ENCODE measurements at regions of chr1 and their contacts with region 1.

Region 1: GRCh38 chr1:161021165-161021960 is 411 bp upstream of the F11R start:
- DNase-seq: peak; percentile 99
- H3K4me3 Mint-ChIP-seq: peak overlapping the region; percentile 80
- H3K27ac Mint-ChIP-seq: peak overlapping the region; percentile 94
- H3K4me1 Mint-ChIP-seq: peaks cover 47% of the 10 kb centered on the region
- H3K27me3 Mint-ChIP-seq: no peaks in the 10 kb centered on the region
- CTCF ChIP-seq: no peak

Region 2: GRCh38 chr1:160997323-160998038 is 23.9 kb before region 1 on chr1:
- CTCF ChIA-PET with region 1: interaction called, 58 read pairs
- POLR2A ChIA-PET with region 1: interaction called, 148 read pairs
- intact Hi-C with region 1: loop called (anchors 2 kb)
- DNase-seq: peak; percentile 74
- H3K4me3 Mint-ChIP-seq: no peak overlapping the region
- H3K27ac Mint-ChIP-seq: no peak overlapping the region
- H3K4me1 Mint-ChIP-seq: peaks cover 35% of the 10 kb centered on the region
- H3K27me3 Mint-ChIP-seq: no peaks in the 10 kb centered on the region
- CTCF ChIP-seq: peak; percentile 44

Region 3: GRCh38 chr1:161071886-161072371 is 50.6 kb after region 1 on chr1:
- CTCF ChIA-PET with region 1: interaction called, 11 read pairs
- POLR2A ChIA-PET with region 1: interaction called, 82 read pairs
- intact Hi-C with region 1: no loop called
- DNase-seq: peak; percentile 73
- H3K4me3 Mint-ChIP-seq: peak overlapping the region; percentile 90
- H3K27ac Mint-ChIP-seq: peak overlapping the region; percentile 46
- H3K4me1 Mint-ChIP-seq: peaks cover 51% of the 10 kb centered on the region
- H3K27me3 Mint-ChIP-seq: no peaks in the 10 kb centered on the region
- CTCF ChIP-seq: peak; percentile 87

Region 4: GRCh38 chr1:161106431-161106830 is 85.1 kb after region 1 on chr1:
- CTCF ChIA-PET with region 1: interaction called, 5 read pairs
- POLR2A ChIA-PET with region 1: interaction called, 19 read pairs
- intact Hi-C with region 1: no loop called
- DNase-seq: no peak
- H3K4me3 Mint-ChIP-seq: no peak overlapping the region
- H3K27ac Mint-ChIP-seq: peak overlapping the region; percentile 9
- H3K4me1 Mint-ChIP-seq: peaks cover 20% of the 10 kb centered on the region
- H3K27me3 Mint-ChIP-seq: no peaks in the 10 kb centered on the region
- CTCF ChIP-seq: no peak

Region 5: DNA sequence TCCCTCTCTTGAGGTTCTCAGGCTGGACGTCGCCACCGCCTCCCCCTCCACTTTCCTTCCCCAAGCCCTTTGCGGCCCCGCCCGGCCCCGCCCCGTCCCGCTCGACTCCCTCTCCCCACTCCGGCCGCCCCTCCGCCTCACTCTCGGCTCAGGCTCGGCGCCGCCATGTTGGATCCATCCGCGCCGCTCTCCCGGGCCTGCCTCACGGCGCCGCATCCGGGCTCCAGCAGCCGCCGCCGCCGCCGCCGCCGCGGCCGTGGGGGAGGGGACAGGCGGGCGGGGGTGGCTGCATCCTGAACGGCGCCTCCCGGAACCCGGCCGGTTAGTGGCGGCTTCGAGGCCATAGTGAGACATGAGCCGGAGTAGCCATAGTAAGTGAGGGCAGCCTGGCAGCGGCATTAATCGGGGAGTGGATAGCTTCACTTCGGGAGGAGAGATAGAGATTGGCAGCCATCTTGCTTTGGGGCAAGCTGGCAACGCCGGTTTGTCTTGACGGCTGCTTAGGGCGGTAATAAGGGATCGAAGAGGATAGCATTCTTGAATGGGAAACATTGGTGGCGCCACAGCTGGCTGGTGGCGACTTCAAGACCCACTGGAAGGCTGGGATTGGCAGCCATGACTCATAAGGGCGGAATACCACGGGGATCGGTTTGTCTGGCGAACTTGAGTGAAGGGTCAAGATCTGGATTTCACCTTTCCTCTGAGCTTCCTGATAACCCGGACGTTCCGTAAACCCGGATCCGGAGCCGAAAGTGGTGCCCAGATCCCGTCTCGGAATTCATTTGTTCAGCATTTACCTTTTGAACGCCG is 111.3 kb after region 1 on chr1 and contains the start of gene DEDD:
- CTCF ChIA-PET with region 1: interaction called, 3 read pairs
- POLR2A ChIA-PET with region 1: interaction called, 101 read pairs
- intact Hi-C with region 1: no loop called
- DNase-seq: peak; percentile 99
- H3K4me3 Mint-ChIP-seq: no peak within 1 kb of the TSS
- H3K27ac Mint-ChIP-seq: no peak within 1 kb of the TSS
- H3K4me1 Mint-ChIP-seq: peaks cover 23% of the 10 kb centered on the region
- H3K27me3 Mint-ChIP-seq: no peaks in the 10 kb centered on the region
- CTCF ChIP-seq: no peak
- total RNA-seq, gene DEDD: 63.1 and 73.6 TPM in 2 replicates

Region 6: GRCh38 chr1:161165742-161166668 is 144.6 kb after region 1 on chr1 and contains the start of gene PPOX:
- CTCF ChIA-PET with region 1: interaction called, 4 read pairs
- POLR2A ChIA-PET with region 1: interaction called, 24 read pairs
- intact Hi-C with region 1: no loop called
- DNase-seq: peak; percentile 100
- H3K4me3 Mint-ChIP-seq: peak within 1 kb of the TSS; percentile 98
- H3K27ac Mint-ChIP-seq: peak within 1 kb of the TSS; percentile 100
- H3K4me1 Mint-ChIP-seq: peaks cover 47% of the 10 kb centered on the region
- H3K27me3 Mint-ChIP-seq: no peaks in the 10 kb centered on the region
- CTCF ChIP-seq: peak; percentile 36
- total RNA-seq, gene PPOX: 30.3 and 32.4 TPM in 2 replicates

Region 7: GRCh38 chr1:161314201-161314981 is 293.0 kb after region 1 on chr1 and contains the start of gene SDHC:
- CTCF ChIA-PET with region 1: no interaction called
- POLR2A ChIA-PET with region 1: interaction called, 10 read pairs
- intact Hi-C with region 1: no loop called
- DNase-seq: peak; percentile 87
- H3K4me3 Mint-ChIP-seq: peak within 1 kb of the TSS; percentile 97
- H3K27ac Mint-ChIP-seq: peak within 1 kb of the TSS; percentile 100
- H3K4me1 Mint-ChIP-seq: peaks cover 13% of the 10 kb centered on the region
- H3K27me3 Mint-ChIP-seq: no peaks in the 10 kb centered on the region
- CTCF ChIP-seq: peak; percentile 35
- total RNA-seq, gene SDHC: 204 and 224 TPM in 2 replicates

Region 8: GRCh38 chr1:161763522-161764098 is 742.2 kb after region 1 on chr1:
- CTCF ChIA-PET with region 1: no interaction called
- POLR2A ChIA-PET with region 1: no interaction called
- intact Hi-C with region 1: no loop called
- DNase-seq: peak; percentile 72
- H3K4me3 Mint-ChIP-seq: peak overlapping the region; percentile 100
- H3K27ac Mint-ChIP-seq: peak overlapping the region; percentile 40
- H3K4me1 Mint-ChIP-seq: peaks cover 19% of the 10 kb centered on the region
- H3K27me3 Mint-ChIP-seq: no peaks in the 10 kb centered on the region
- CTCF ChIP-seq: peak; percentile 49

Measured in MCF 10A (cell line).